Psoas muscle (tissue), 8 donors: ENCODE measurements at regions of chr6 and their contacts with region 1.

Region 1: DNA sequence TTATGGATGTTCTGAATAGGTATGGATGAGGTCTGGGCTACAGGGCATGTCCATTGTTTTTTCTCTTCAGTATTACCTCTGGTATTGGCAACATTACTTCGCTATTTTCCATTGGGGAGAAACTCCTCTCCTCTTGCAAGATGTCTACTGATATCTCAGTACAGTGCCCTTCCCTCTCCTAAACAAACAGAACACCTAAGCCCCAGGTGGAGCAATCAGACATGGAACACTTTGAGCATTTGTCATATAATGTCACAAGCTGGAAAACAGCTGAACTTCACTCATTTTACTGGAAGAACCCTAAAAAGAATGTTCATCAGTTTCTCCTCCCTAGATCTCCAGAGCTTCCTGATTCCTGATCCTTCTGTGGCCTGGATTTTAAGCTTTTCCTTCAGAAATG is 339.8 kb downstream of the FRK start:
- DNase-seq: no peak
- ATAC-seq: no peak
- H3K4me3 ChIP-seq: no peak overlapping the region
- H3K27ac ChIP-seq: no peak overlapping the region
- H3K4me1 ChIP-seq: no peaks in the 10 kb centered on the region
- H3K27me3 ChIP-seq: no peaks in the 10 kb centered on the region
- CTCF ChIP-seq: no peak

Region 2: DNA sequence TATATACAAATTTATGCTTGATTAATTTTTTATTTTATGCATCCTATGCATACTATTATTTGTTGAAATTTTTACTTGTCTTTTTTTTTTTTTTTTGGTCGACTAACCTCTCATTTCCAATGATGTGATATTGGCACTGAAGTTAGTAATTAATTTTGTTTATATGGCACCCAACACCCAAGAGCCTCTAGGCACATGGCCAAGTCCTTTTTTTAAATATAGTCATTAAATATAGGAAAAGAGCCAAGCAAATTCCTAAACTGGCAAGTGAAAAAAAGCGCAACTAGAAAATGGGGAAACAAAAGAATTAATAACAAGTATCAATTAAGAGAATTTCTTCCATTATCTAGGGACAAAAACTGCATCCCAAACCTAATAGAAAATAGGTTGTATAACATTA is 1292.6 kb before region 1 on chr6:
- intact Hi-C with region 1: loop called in 1 of 2 experiments (anchors 5 kb)
- DNase-seq: no peak
- ATAC-seq: no peak
- H3K4me3 ChIP-seq: no peak overlapping the region
- H3K27ac ChIP-seq: no peak overlapping the region
- H3K4me1 ChIP-seq: no peaks in the 10 kb centered on the region
- H3K27me3 ChIP-seq: no peaks in the 10 kb centered on the region
- CTCF ChIP-seq: no peak